Activated CD4-positive, alpha-beta T cell treated with anti-CD3 and anti-CD28 coated beads for 36 hours (primary cell): ENCODE measurements at regions of chr9 and their contacts with region 1.

Region 1: DNA sequence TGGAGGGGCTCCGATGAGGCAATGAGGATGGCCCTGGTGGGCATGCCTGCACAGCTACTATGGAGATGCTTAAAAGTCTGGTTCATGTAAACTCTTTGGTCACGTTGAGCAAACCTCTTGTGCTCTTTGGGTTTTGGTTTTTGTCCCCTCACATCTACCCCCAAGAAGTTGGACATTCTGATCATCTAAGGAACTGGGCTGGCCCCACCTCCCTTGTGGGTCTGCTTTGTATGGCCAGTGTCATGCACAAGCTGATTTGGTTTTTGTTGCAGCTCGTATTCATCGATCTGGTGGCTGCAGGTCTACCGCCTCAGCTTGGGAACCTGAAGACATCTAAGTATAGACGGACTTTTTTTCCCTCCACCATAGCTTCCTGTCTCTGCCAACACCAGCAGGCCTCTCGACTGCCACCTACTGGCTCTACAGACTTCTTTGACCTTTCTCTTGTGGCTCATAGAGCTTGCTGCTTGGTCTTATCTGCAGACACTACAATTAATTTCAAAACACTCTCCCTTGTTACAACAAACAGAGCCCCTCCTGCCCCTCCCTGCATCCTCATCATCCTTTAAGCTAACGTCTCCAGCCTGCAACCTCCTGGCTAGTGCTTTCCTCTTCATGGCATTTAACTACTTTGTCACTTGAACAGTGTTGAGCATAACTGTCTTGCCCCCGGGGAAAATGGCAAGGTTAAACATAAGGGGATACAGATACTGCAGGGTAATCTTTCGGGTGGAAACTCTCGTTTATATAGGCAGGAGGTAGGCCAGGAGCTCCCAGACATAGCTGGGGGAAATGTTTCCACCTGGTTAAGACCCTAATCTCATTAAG is 34.5 kb downstream of the TSTD2 start:
- DNase-seq: peak; percentile 85
- ATAC-seq: peak; percentile 99
- H3K4me3 Mint-ChIP-seq: no peak overlapping the region
- H3K27ac Mint-ChIP-seq: peak overlapping the region; percentile 66
- H3K4me1 Mint-ChIP-seq: peaks cover 7% of the 10 kb centered on the region
- H3K27me3 Mint-ChIP-seq: no peaks in the 10 kb centered on the region

Region 2: GRCh38 chr9:96122751-96123150 is 1475.9 kb before region 1 on chr9:
- CTCF ChIA-PET with region 1: no interaction called
- POLR2A ChIA-PET with region 1: no interaction called
- intact Hi-C with region 1: no loop called
- DNase-seq: no peak
- ATAC-seq: no peak
- H3K4me3 Mint-ChIP-seq: no peak overlapping the region
- H3K27ac Mint-ChIP-seq: no peak overlapping the region
- H3K4me1 Mint-ChIP-seq: peaks cover 2% of the 10 kb centered on the region
- H3K27me3 Mint-ChIP-seq: peaks cover 6% of the 10 kb centered on the region

Region 3: DNA sequence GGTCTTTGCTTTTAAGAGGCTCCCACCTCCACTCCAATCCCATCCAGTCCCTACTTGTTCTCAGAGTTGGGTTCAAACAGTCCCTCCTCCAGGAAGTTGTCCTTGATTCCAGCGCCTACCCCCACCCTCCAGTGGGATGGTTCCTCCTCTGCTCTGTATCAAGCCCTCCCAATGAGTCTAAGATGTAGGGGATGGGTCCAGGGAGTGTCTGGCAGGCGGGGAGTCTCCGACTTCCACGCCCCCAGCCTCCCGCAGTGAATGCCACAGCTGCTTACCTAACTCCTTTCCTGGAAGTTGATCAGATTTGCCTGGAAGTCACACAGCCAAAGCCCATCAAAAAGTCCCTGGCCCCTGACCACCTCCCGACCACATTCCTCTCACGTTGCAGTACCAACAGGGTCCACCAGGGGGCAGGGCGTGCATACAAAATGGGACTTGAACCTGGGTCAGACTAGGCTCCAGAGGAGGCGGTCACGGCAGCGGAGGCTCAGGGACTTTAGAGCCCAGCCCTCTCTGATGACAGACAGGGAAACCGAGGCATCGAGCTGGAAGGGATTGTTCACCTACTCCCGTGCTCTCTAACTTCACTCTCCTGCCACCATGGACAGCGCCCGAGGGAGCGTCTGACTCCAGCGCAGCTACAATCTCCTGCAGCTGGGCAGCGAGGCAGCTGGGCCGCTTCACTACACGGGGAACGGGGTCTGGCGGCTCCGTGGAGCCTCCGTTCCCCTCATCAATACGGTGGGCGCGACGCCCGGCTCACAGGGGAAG is 211.8 kb before region 1 on chr9:
- CTCF ChIA-PET with region 1: interaction called, 19 read pairs
- POLR2A ChIA-PET with region 1: no interaction called
- intact Hi-C with region 1: loop called in 1 of 2 experiments (anchors 1 kb)
- DNase-seq: peak; percentile 86
- ATAC-seq: peak; percentile 55
- H3K4me3 Mint-ChIP-seq: no peak overlapping the region
- H3K27ac Mint-ChIP-seq: no peak overlapping the region
- H3K4me1 Mint-ChIP-seq: peaks cover 14% of the 10 kb centered on the region
- H3K27me3 Mint-ChIP-seq: peaks cover 16% of the 10 kb centered on the region

Region 4: GRCh38 chr9:97419309-97419867 is 179.3 kb before region 1 on chr9:
- CTCF ChIA-PET with region 1: interaction called, 23 read pairs
- POLR2A ChIA-PET with region 1: no interaction called
- intact Hi-C with region 1: loop called in 1 of 2 experiments (anchors 5 kb)
- DNase-seq: no peak
- ATAC-seq: no peak
- H3K4me3 Mint-ChIP-seq: no peak overlapping the region
- H3K27ac Mint-ChIP-seq: no peak overlapping the region
- H3K4me1 Mint-ChIP-seq: peaks cover 14% of the 10 kb centered on the region
- H3K27me3 Mint-ChIP-seq: no peaks in the 10 kb centered on the region

Region 5: DNA sequence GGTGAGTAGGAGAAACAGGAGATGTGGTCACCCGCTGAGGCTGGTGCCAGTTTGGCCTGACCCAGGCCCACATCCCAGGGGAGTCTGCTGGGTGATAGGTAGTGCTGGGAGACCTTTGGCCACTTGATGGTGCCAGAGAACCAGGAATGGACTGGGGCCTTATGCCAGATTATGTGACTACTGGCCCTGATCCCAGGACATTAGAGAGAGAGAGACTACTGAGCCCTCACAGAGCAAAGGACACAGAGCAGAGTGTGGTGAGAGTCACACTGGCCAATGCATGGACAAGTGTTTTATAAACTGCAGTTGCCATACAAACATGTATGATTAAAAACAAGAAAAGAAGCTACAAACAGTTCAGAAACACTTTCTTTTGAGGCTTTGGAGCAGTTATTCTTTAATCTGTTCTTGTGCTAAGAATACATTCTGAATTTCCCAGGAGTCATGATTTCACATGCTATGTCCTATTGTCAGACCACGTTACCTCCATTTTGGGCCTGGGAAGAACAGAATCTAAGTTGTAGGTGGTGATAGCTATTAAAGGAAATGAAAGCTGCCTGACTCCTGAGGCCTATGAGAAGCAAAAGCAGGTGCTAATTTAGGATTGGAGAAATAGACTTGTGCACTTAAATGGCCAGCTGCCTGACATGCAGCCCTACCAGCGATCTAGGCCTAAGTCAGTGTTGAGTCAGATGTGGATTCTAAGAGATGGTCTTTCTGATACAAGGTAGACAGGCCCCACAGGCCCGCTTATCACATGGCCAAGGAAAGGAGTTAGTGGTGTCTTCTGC is 129.8 kb before region 1 on chr9:
- CTCF ChIA-PET with region 1: interaction called, 135 read pairs
- POLR2A ChIA-PET with region 1: no interaction called
- intact Hi-C with region 1: loop called (anchors 1 kb)
- DNase-seq: peak; percentile 66
- ATAC-seq: peak; percentile 74
- H3K4me3 Mint-ChIP-seq: no peak overlapping the region
- H3K27ac Mint-ChIP-seq: no peak overlapping the region
- H3K4me1 Mint-ChIP-seq: no peaks in the 10 kb centered on the region
- H3K27me3 Mint-ChIP-seq: no peaks in the 10 kb centered on the region

Region 6: GRCh38 chr9:97475059-97475458 is 123.6 kb before region 1 on chr9:
- CTCF ChIA-PET with region 1: interaction called, 135 read pairs
- POLR2A ChIA-PET with region 1: no interaction called
- intact Hi-C with region 1: no loop called
- DNase-seq: no peak
- ATAC-seq: no peak
- H3K4me3 Mint-ChIP-seq: no peak overlapping the region
- H3K27ac Mint-ChIP-seq: no peak overlapping the region
- H3K4me1 Mint-ChIP-seq: no peaks in the 10 kb centered on the region
- H3K27me3 Mint-ChIP-seq: no peaks in the 10 kb centered on the region

Region 7: DNA sequence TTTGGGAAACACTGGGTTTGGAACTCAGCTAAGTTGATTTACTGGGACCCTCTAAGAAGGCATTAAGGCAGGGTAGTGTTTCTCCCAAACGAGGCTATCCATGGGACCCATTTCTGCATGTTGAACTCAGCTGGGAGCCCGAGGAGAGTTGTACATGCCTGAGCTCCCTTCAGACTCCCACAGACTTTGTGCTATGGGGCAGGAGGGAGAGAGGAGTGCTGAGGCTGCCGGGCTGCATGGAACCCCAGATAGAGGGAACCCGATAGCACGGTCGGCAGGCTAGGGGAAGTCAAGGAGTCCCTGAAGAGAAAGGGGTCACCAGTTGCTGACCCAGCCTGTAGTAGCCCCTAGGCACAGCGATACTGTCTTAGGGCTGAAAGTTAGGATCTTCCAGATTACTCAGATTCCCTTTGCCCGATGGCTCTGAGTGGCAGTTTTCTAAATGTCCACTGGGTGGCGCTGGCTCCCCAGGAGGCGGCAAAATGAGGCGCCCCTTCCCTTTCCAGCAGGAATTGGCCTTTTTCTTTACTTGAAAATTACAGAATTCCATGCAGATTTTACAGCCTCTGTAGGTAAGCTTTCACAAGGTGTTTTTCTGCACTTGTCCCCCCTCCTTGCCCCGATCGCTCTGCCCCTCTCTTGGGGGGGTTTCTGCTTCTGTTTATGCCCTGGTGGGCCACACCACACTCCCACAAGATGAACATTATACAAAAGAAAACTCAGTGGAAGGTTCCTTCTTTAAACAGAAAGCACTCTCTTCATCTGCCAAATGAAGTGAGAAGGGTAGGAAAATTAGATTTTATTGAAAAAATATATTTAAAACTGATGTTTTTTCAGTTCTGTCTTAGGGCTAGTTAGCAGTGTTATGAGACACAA is 475.7 kb after region 1 on chr9:
- CTCF ChIA-PET with region 1: no interaction called
- POLR2A ChIA-PET with region 1: no interaction called
- intact Hi-C with region 1: no loop called
- DNase-seq: peak; percentile 81
- ATAC-seq: no peak
- H3K4me3 Mint-ChIP-seq: no peak overlapping the region
- H3K27ac Mint-ChIP-seq: peak overlapping the region; percentile 90
- H3K4me1 Mint-ChIP-seq: peaks cover 34% of the 10 kb centered on the region
- H3K27me3 Mint-ChIP-seq: no peaks in the 10 kb centered on the region